ENCODE measurements at regions of chr4 and their contacts with region 1.

Region 1: GRCh38 chr4:145234091-145234706 is 53.8 kb upstream of the OTUD4 start:
- DNase-seq: no peak
- ATAC-seq: peak; percentile 61

Region 2: DNA sequence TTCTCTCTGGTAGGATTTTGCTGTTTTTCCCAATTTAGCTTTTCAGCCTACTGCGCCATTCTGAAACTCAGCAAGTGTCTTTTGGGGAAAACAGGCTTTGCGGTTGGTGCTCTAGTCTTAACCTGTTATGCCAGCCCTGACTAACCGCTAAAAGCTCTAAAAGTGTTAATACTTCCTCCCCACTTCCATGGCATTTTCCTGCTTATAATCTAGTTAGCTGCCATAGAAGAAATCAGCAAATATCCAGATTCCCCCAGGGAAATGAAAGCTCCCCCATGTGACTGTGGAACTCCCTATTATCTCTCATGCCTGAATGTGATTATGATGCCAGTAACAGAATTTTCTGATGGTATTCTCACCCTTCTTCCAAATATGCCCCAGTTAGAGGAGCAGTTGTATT is 1065.0 kb before region 1 on chr4:
- intact Hi-C with region 1: loop called (anchors 5 kb)
- DNase-seq: no peak
- ATAC-seq: no peak

Region 3: DNA sequence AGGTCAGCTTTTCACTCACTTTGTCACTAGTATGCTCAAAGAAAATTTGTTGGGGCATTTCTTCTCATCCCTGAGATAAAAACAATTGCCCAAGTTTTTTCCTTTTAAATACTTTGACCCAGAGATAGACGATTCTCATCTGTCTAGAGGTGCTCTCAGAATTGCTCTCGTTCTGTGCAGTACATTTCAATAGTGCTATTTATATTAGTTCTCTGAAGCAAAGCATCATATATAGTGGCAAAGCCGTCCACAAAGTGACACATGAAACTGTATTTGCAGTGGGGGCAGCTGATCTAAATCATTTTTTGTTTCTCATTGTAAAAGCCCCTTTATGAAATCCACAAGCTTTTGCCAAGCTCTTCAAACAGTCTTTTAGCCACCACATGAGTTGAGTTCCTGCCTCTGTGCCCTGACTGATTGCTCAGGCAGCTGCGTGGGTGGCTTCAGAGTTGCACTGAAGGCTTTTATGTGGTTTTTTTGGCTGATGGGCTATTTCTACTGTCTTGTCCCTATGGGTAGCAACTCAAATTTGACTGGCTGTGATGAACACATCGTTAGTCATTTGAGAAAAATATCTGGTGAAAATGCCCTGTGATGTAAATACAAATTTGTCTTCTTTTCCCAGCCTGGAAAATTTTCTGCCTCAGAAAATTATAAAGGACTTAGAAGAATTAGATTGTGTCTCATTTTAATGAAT is 65.3 kb after region 1 on chr4:
- intact Hi-C with region 1: no loop called
- DNase-seq: peak; percentile 60
- ATAC-seq: peak; percentile 76

Region 4: DNA sequence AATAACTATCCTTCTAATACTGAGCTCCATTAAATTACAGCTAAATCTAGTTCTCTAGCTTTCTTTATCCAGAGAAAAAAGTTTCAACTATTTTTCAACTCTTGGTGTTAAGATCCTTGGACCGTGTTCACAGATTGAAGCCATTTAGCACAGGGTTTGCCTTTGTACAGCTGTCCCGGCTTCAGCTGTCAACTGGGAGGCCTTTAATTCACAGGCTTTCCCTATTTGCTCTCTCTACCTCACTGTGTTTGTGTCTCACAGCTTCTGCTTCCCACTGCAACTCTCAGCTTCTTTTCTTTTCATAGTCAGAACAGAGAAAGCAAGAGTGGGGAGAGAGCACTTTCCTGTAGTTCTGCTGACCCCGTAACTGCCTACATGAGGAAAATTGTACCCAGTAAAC is 170.6 kb after region 1 on chr4:
- intact Hi-C with region 1: no loop called
- DNase-seq: no peak
- ATAC-seq: no peak

Region 5: DNA sequence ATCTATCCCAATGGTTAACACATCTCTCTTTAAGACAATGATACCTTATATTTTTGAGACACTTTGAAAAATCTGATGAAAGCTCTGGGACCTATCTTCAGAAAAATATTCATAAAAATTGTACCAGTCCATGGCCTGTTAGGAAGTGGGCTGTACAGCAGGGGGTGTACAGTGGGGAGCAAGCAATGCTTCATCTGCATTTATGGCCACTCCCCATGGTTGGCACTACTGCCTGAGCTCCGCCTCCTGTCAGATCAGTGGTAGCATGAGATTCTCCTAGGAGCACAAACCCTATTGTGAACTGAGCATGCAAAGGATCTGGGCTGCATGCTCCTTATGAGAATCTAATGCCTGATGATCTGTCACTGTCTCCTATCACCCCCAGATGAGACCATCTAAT is 488.4 kb after region 1 on chr4:
- intact Hi-C with region 1: no loop called
- DNase-seq: no peak
- ATAC-seq: no peak